PC-9 (cell line): ENCODE measurements at regions of chr1 and their contacts with region 1.

Region 1: DNA sequence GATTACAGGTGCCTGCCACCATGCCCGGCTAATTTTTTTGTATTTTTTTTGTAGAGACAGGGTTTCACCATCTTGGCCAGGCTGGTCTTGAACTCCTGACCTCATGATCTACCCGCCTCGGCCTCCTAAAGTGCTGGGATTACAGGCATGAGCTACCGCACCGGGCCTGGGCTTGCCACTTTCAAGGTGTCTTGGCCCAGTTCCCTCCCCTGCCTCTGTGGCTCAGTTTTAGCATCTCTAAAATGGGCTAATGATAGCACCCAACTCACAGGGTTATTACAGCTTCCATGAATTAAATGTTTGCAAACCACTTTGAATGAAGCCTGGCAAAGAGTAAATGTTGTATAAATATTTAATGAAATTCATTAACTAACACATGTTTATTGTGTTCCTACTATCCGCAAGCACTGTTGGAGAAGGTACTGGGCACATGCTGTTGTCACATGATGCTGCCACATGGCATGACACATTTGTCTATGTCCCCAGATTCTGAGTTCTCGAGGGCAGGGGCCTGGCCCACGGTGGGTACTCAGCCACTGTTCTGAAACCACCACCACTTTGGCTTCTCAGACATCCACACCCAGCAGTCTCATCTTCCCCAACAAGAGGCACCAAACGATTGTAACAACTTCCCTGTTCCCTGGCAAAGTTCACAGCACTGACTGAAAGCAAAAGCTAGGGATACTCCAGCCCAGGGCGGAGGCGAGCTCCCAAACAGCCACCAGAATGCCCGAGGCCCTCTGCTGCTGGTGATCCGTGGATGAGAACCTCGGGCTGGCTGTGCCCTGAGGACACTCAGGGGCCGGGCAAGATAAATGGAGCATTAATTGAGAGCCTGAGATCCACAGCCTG is 9.7 kb downstream of the IFFO2 start:
- DNase-seq: no peak
- H3K4me3 ChIP-seq: no peak overlapping the region
- H3K27ac ChIP-seq: no peak overlapping the region
- H3K4me1 ChIP-seq: no peaks in the 10 kb centered on the region
- H3K27me3 ChIP-seq: no peaks in the 10 kb centered on the region
- CTCF ChIP-seq: no peak

Region 2: GRCh38 chr1:19046972-19047731 is 100.4 kb after region 1 on chr1:
- CTCF ChIA-PET with region 1: interaction called, 12 read pairs
- POLR2A ChIA-PET with region 1: no interaction called
- intact Hi-C with region 1: no loop called
- DNase-seq: no peak
- H3K4me3 ChIP-seq: no peak overlapping the region
- H3K27ac ChIP-seq: no peak overlapping the region
- H3K4me1 ChIP-seq: no peaks in the 10 kb centered on the region
- H3K27me3 ChIP-seq: no peaks in the 10 kb centered on the region
- CTCF ChIP-seq: no peak